AG04449 (cell line): ENCODE measurements at regions of chr16 and their contacts with region 1.

Region 1: DNA sequence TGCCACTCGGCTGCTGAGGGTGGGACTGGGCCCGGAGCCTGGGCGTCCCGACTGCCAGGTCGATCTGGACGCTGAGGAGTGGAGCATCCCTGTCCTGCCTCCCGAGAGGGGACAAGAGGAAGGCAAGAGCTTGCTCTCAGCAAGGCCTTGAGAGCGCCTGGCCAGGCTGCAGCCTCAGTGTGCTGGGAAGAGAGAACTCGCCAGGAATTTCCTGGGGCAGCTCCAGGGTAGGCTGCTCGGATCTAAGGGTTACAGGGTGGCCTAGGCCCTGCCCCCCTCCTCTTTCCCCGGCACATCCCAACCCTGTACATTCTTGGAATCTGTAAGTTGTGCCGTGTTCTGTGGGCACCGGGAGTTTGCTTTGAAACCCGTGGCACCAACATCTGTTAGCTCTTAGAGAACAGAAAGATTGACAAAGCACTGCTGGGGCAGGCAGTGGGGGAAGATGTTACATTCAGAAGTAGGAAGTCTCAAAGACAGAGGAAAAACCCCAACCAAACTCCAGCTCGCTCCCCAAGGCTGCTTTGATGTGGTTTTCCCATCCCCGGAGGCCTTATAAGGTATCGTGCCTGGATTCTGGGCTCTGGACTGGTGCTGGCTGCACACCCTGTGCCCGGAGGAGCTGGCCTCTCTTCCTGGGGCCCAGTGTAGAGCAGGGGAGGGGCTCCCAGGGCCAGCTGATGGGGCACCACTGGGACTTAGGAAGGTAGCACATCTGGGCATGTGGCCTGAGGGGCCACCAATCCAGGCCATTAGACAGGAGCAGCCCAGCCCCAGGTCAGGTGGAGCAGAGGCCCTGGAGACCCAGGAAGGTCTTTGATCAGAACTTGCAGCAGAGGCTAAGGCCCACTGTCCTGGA is 55.2 kb downstream of the NKD1 start:
- DNase-seq: no peak
- H3K4me3 ChIP-seq: no peak overlapping the region
- CTCF ChIP-seq: no peak

Region 2: DNA sequence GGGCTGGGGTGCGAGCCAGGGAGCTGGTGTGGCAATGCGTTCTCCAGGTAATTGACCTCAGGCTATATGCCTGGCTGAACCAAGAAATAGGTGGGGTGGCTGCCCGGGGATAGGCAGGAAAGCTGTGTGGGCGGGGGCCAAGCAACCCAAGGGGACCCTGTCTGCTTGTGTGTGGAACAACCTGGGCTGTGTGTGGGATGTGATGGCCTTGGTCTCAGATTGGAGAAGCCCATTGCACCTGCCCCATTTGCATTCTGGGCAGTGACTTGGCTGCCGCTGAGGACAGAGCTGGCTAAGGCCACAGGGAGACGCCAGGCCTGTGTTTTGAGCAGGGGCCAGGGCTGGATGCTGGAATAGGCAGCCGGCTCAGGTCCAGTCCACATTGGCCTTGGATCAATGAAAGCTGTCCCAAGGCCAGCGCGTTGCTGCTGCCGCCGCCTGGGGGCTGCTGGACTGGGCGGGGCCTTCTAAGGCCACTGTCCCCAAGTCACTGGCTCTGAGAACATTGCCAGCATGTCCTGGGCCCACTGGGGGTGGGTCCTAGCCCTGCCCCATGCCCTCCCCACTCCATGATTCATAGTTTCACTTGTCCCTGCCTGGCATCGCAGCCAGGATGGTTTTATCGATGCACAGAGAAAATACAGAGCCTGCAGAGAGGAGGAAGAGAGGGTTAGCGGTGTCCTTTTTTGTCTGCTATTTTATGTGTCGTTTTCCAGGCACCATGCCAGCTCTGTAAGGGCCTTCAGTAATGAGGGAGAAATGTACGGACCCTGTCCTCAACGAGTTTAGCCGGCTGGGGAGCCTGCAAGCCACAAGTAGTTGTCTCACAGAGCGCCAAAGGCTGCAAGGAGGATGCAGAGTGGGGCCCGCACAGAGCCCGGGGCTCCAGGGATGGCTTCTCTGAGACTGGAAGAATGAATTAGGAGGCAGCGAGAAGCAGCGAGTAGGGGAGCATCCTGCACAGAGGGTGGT is 11.3 kb before region 1 on chr16:
- CTCF ChIA-PET with region 1: interaction called, 16 read pairs
- POLR2A ChIA-PET with region 1: no interaction called
- DNase-seq: no peak
- H3K4me3 ChIP-seq: no peak overlapping the region
- CTCF ChIP-seq: no peak